Activated B cell treated with CpG ODN at 0.5 μM for 24 hours (primary cell): ENCODE measurements at regions of chr17 and their contacts with region 1.

Region 1: DNA sequence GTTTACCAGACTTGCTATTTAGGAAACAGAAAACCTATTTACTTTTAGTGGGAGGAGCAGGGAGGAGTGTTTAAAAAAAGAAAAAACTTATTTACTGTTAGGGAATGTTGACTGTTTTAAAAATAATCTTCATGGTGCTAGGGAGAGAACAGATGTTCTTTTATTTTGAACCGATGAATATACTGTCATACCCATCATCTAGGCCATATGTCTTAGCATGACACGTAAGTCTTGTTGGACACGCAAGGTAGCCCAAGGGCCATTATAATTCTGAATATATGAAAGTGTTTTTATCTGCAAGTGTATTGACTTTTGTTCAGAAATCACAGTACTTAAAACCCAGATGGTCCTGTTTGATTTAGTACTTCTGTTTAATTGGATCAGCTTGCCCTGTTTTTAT is 11.6 kb downstream of the WIPF2 start:
- DNase-seq: no peak
- ATAC-seq: no peak
- H3K4me3 Mint-ChIP-seq: no peak overlapping the region
- H3K27ac Mint-ChIP-seq: no peak overlapping the region
- H3K4me1 Mint-ChIP-seq: peaks cover 19% of the 10 kb centered on the region
- H3K27me3 Mint-ChIP-seq: no peaks in the 10 kb centered on the region
- CTCF ChIP-seq: no peak

Region 2: GRCh38 chr17:40098846-40099618 is 131.6 kb before region 1 on chr17:
- CTCF ChIA-PET with region 1: no interaction called
- POLR2A ChIA-PET with region 1: no interaction called
- intact Hi-C with region 1: no loop called
- DNase-seq: peak; percentile 95
- ATAC-seq: peak; percentile 64
- H3K4me3 Mint-ChIP-seq: peak overlapping the region; percentile 91
- H3K27ac Mint-ChIP-seq: peak overlapping the region; percentile 90
- H3K4me1 Mint-ChIP-seq: peaks cover 70% of the 10 kb centered on the region
- H3K27me3 Mint-ChIP-seq: no peaks in the 10 kb centered on the region
- CTCF ChIP-seq: no peak

Region 3: GRCh38 chr17:40264458-40265185 is 34.0 kb after region 1 on chr17:
- CTCF ChIA-PET with region 1: no interaction called
- POLR2A ChIA-PET with region 1: interaction called, 3 read pairs
- intact Hi-C with region 1: loop called (anchors 5 kb)
- DNase-seq: no peak
- ATAC-seq: no peak
- H3K4me3 Mint-ChIP-seq: no peak overlapping the region
- H3K27ac Mint-ChIP-seq: no peak overlapping the region
- H3K4me1 Mint-ChIP-seq: no peaks in the 10 kb centered on the region
- H3K27me3 Mint-ChIP-seq: no peaks in the 10 kb centered on the region
- CTCF ChIP-seq: no peak